Activated CD4-positive, alpha-beta T cell treated with anti-CD3 and anti-CD28 coated beads for 36 hours (primary cell): ENCODE measurements at regions of chr1 and their contacts with region 1.

Region 1: DNA sequence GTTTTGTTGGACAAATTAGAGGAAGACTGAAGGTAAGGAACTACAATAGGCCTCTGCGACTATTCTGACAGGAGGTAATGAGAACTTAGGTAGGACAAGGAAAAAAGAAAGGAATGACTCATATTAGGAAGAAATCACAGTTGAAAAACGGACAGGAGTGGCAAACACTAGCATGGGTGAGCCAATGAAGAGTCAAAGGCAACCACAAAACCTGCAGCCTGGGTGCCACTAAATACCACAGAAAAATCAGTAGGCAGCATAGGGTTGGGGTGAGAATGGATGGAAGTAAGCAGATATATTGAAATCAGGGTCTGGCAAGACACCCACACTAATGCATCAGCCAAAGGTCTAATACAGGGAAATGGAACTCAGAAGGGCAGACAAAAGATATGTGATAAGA is 10.0 kb downstream of the RBM34 start:
- DNase-seq: no peak
- ATAC-seq: no peak
- H3K4me3 Mint-ChIP-seq: no peak overlapping the region
- H3K27ac Mint-ChIP-seq: peak overlapping the region; percentile 11
- H3K4me1 Mint-ChIP-seq: peaks cover 33% of the 10 kb centered on the region
- H3K27me3 Mint-ChIP-seq: no peaks in the 10 kb centered on the region

Region 2: GRCh38 chr1:235113183-235113917 is 37.7 kb before region 1 on chr1:
- CTCF ChIA-PET with region 1: no interaction called
- POLR2A ChIA-PET with region 1: no interaction called
- intact Hi-C with region 1: loop called in 1 of 2 experiments (anchors 5 kb)
- DNase-seq: no peak
- ATAC-seq: no peak
- H3K4me3 Mint-ChIP-seq: no peak overlapping the region
- H3K27ac Mint-ChIP-seq: no peak overlapping the region
- H3K4me1 Mint-ChIP-seq: peaks cover 6% of the 10 kb centered on the region
- H3K27me3 Mint-ChIP-seq: no peaks in the 10 kb centered on the region